ENCODE measurements at regions of chr4 and their contacts with region 1.

Region 1: GRCh38 chr4:169047956-169048355 is 37.9 kb upstream of the CBR4 start:
- DNase-seq: no peak
- H3K4me3 ChIP-seq: no peak overlapping the region
- H3K27ac ChIP-seq: no peak overlapping the region
- H3K4me1 ChIP-seq: peaks cover 12% of the 10 kb centered on the region
- H3K27me3 ChIP-seq: no peaks in the 10 kb centered on the region
- CTCF ChIP-seq: no peak

Region 2: GRCh38 chr4:168769416-168769815 is 278.5 kb before region 1 on chr4:
- CTCF ChIA-PET with region 1: no interaction called
- POLR2A ChIA-PET with region 1: no interaction called
- intact Hi-C with region 1: no loop called
- DNase-seq: no peak
- H3K4me3 ChIP-seq: no peak overlapping the region
- H3K27ac ChIP-seq: no peak overlapping the region
- H3K4me1 ChIP-seq: peaks cover 7% of the 10 kb centered on the region
- H3K27me3 ChIP-seq: no peaks in the 10 kb centered on the region
- CTCF ChIP-seq: no peak

Region 3: GRCh38 chr4:169143335-169143734 is 95.4 kb after region 1 on chr4:
- CTCF ChIA-PET with region 1: no interaction called
- POLR2A ChIA-PET with region 1: interaction called, 12 read pairs
- intact Hi-C with region 1: no loop called
- DNase-seq: no peak
- H3K4me3 ChIP-seq: no peak overlapping the region
- H3K27ac ChIP-seq: no peak overlapping the region
- H3K4me1 ChIP-seq: peaks cover 8% of the 10 kb centered on the region
- H3K27me3 ChIP-seq: no peaks in the 10 kb centered on the region
- CTCF ChIP-seq: no peak

Measured in A673 (cell line).